Activated T-helper 1 cell treated with anti-CD3 and anti-CD28 coated beads, Interleukin-12 subunit alpha, Interleukin-12 subunit beta, Interleukin-2, Interleukin-4 antibody, amounts not matched to agents 30 ng/mL and 10 ng/mL and 1 ng/mL, durations not matched to agents 14 hours and 24 hours and 36 hours (primary cell): ENCODE measurements at regions of chr5 and their contacts with region 1.

Region 1: GRCh38 chr5:176660860-176661641 is 13.8 kb downstream of the TSPAN17 start:
- DNase-seq: peak; percentile 67
- H3K4me3 Mint-ChIP-seq: no peak overlapping the region
- H3K27ac Mint-ChIP-seq: no peak overlapping the region
- H3K4me1 Mint-ChIP-seq: peaks cover 32% of the 10 kb centered on the region
- H3K27me3 Mint-ChIP-seq: peaks cover 12% of the 10 kb centered on the region

Region 2: DNA sequence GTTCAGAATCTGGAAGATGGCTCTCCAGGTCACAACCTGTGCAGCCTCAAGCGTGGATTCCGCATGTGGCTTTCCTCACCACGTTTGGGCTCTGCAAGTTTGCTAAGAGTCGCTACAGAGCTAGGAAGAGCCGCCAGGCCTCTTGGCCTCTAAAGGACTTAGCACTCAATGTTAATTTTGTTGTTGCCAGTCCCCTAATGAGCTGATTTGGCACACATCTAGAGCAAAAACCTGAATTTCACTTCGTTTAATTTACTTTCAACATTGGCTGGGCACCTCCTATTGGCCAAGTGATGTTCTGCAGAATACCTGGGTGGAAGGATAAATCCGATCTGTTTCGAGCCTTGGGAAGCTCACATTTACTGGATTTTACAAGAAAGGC is 83.5 kb after region 1 on chr5:
- intact Hi-C with region 1: loop called (anchors 5 kb)
- DNase-seq: no peak
- H3K4me3 Mint-ChIP-seq: no peak overlapping the region
- H3K27ac Mint-ChIP-seq: no peak overlapping the region
- H3K4me1 Mint-ChIP-seq: peaks cover 26% of the 10 kb centered on the region
- H3K27me3 Mint-ChIP-seq: peaks cover 57% of the 10 kb centered on the region

Region 3: DNA sequence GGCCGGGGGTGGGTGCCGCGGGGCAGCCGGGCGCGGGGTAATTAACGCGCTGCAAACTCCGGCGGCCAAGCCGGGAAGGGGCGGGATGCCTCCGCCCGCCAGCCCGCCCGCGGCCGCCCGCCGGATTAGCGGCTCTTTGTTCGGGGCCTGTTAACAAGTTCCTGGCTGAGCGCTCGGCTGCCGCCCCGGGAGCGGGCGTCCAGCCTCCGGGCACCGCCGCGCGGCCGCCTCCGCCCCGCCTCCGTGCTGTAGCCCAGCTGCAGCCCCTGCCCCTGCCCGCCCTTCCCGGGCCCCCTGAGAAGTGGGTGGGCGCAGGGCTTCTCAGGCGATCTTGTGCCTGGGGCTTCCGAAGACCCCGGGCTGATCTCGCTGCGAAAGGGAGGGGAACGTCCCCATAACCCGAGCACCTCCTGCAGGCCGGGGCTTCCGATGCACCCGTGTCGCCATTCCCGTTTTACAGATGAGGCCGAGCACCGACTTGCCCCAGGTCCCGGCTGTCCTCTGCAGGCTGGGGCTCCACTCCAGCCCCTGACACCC is 156.9 kb after region 1 on chr5:
- intact Hi-C with region 1: loop called (anchors 1 kb)
- DNase-seq: no peak
- H3K4me3 Mint-ChIP-seq: no peak overlapping the region
- H3K27ac Mint-ChIP-seq: no peak overlapping the region
- H3K4me1 Mint-ChIP-seq: peaks cover 7% of the 10 kb centered on the region
- H3K27me3 Mint-ChIP-seq: peaks cover 43% of the 10 kb centered on the region

Region 4: GRCh38 chr5:176959051-176959450 is 298.0 kb after region 1 on chr5:
- intact Hi-C with region 1: loop called (anchors 2 kb)
- DNase-seq: no peak
- H3K4me3 Mint-ChIP-seq: no peak overlapping the region
- H3K27ac Mint-ChIP-seq: no peak overlapping the region
- H3K4me1 Mint-ChIP-seq: peaks cover 5% of the 10 kb centered on the region
- H3K27me3 Mint-ChIP-seq: no peaks in the 10 kb centered on the region

Region 5: DNA sequence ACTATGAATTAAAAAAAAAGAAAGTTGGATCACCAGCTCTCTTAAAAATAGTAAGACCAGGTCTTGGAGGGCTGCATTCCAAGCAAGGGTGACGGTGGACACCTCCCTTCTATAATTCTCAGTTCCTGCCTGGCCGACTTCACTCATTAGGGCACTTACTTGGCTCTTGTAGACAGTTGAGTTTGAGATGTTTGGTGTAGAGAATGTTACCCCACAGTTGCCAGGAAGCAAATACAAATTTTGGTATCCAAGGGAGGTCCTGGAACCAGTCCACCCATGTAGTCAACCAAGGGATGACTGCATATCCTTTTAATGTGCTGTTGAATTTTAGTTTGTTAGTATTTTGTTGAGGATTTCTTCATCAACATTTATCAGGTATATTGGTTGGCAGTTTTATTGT is 959.5 kb after region 1 on chr5:
- intact Hi-C with region 1: no loop called
- DNase-seq: no peak
- H3K4me3 Mint-ChIP-seq: no peak overlapping the region
- H3K27ac Mint-ChIP-seq: no peak overlapping the region
- H3K4me1 Mint-ChIP-seq: no peaks in the 10 kb centered on the region
- H3K27me3 Mint-ChIP-seq: no peaks in the 10 kb centered on the region